ENCODE measurements at regions of chr5 and their contacts with region 1.

Region 1: DNA sequence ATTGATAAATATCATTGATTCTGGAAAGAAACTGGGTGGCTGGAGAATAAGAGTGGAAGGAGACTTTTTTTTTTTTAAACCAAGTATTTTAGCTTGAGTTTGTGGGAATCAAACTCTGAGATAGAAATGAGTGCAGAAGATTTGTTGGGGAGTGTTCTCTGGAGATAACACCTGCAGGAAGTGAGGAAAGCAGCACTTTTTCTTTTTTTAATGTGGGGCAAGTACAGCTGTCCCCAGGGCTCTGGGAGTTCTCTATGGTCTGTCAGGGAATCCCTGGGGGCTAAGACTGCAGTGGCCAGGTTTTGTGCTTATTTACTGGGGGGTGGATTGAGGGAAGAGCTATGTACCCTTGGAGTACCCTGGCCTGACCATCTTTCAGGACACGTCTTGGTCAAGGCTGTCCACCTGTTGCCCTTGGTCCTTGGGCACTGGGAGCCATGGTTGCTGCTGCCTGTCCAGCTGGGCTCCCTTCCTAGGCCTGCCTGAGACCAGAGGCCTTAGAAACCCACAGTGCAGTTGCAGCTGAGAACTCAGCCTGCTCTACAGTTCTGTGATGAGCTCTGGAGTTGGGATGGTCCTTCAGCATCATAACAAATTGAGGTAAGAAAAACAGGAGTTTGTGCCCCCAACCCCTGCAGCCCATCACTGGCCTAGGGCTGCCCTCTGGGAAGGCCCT is 85.8 kb downstream of the PHAX start:
- DNase-seq: no peak
- ATAC-seq: no peak
- H3K4me3 Mint-ChIP-seq: no peak overlapping the region
- H3K27ac Mint-ChIP-seq: no peak overlapping the region
- H3K4me1 Mint-ChIP-seq: peaks cover 24% of the 10 kb centered on the region
- H3K27me3 Mint-ChIP-seq: no peaks in the 10 kb centered on the region
- CTCF ChIP-seq: no peak

Region 2: GRCh38 chr5:126745259-126745992 is 58.8 kb after region 1 on chr5:
- CTCF ChIA-PET with region 1: interaction called, 3 read pairs
- POLR2A ChIA-PET with region 1: no interaction called
- intact Hi-C with region 1: loop called (anchors 5 kb)
- DNase-seq: no peak
- ATAC-seq: no peak
- H3K4me3 Mint-ChIP-seq: no peak overlapping the region
- H3K27ac Mint-ChIP-seq: no peak overlapping the region
- H3K4me1 Mint-ChIP-seq: peaks cover 30% of the 10 kb centered on the region
- H3K27me3 Mint-ChIP-seq: peaks cover 4% of the 10 kb centered on the region
- CTCF ChIP-seq: no peak

Measured in activated CD8-positive, alpha-beta T cell treated with anti-CD3 and anti-CD28 coated beads for 36 hours (primary cell).